K562 (cell line): ENCODE measurements at regions of chr6 and their contacts with region 1.

Region 1: GRCh38 chr6:32190054-32190851 is at the start of gene PBX2:
- DNase-seq: peak; percentile 85 to 98 (median 90)
- ATAC-seq: peak; percentile 72
- H3K4me3 ChIP-seq: peak within 1 kb of the TSS; percentile 79
- H3K27ac ChIP-seq: peak within 1 kb of the TSS; percentile 93
- H3K4me1 ChIP-seq: peaks cover 72 to 77% of the 10 kb centered on the region in 2 experiments
- H3K27me3 ChIP-seq: no peaks in the 10 kb centered on the region
- CTCF ChIP-seq: no peak
- EP300 ChIP-seq: peak; percentile 30; the same call in 1 of the 2 replicates
- POLR2A ChIP-seq: peak; percentile 80
- RAD21 ChIP-seq: no peak
- polyA plus RNA-seq, gene PBX2: 1.9 to 2.8 TPM

Region 2: GRCh38 chr6:32203426-32204247 is 13.4 kb after region 1 on chr6:
- CTCF ChIA-PET with region 1: no interaction called
- POLR2A ChIA-PET with region 1: interaction called, 10 read pairs
- in situ Hi-C with region 1: no loop called
- intact Hi-C with region 1: no loop called
- DNase-seq: no peak
- ATAC-seq: no peak
- H3K4me3 ChIP-seq: no peak overlapping the region
- H3K27ac ChIP-seq: no peak overlapping the region
- H3K4me1 ChIP-seq: peaks cover 3 to 18% of the 10 kb centered on the region in 2 experiments; a peak in 3 of 5 replicates
- H3K27me3 ChIP-seq: peaks cover 10 to 12% of the 10 kb centered on the region in 2 experiments; a peak in 4 of 5 replicates
- CTCF ChIP-seq: no peak
- EP300 ChIP-seq: no peak
- POLR2A ChIP-seq: no peak
- RAD21 ChIP-seq: no peak